Activated T-helper 1 cell treated with anti-CD3 and anti-CD28 coated beads, Interleukin-12 subunit alpha, Interleukin-12 subunit beta, Interleukin-2, Interleukin-4 antibody, amounts not matched to agents 30 ng/mL and 10 ng/mL and 1 ng/mL, durations not matched to agents 14 hours and 24 hours and 36 hours (primary cell): ENCODE measurements at regions of chr13 and their contacts with region 1.

Region 1: GRCh38 chr13:99484473-99484872 is 16.8 kb upstream of the TM9SF2 start:
- DNase-seq: peak; percentile 7
- H3K4me3 Mint-ChIP-seq: no peak overlapping the region
- H3K27ac Mint-ChIP-seq: no peak overlapping the region
- H3K4me1 Mint-ChIP-seq: peaks cover 20% of the 10 kb centered on the region
- H3K27me3 Mint-ChIP-seq: no peaks in the 10 kb centered on the region

Region 2: GRCh38 chr13:99464441-99464949 is 20.0 kb before region 1 on chr13:
- intact Hi-C with region 1: loop called (anchors 2 kb)
- DNase-seq: no peak
- H3K4me3 Mint-ChIP-seq: peak overlapping the region; percentile 43
- H3K27ac Mint-ChIP-seq: peak overlapping the region; percentile 87
- H3K4me1 Mint-ChIP-seq: peaks cover 33% of the 10 kb centered on the region
- H3K27me3 Mint-ChIP-seq: peaks cover 3% of the 10 kb centered on the region

Region 3: GRCh38 chr13:99895223-99895994 is 410.9 kb after region 1 on chr13:
- intact Hi-C with region 1: no loop called
- DNase-seq: no peak
- H3K4me3 Mint-ChIP-seq: peak overlapping the region; percentile 79
- H3K27ac Mint-ChIP-seq: peak overlapping the region; percentile 41
- H3K4me1 Mint-ChIP-seq: peaks cover 15% of the 10 kb centered on the region
- H3K27me3 Mint-ChIP-seq: peaks cover 61% of the 10 kb centered on the region